ENCODE measurements at regions of chr17 and their contacts with region 1.

Region 1: GRCh38 chr17:81387100-81388090 is 7.9 kb upstream of the BAHCC1 start:
- DNase-seq: peak; percentile 59
- H3K4me3 ChIP-seq: peak overlapping the region; percentile 79
- H3K27ac ChIP-seq: peak overlapping the region; percentile 97
- H3K4me1 ChIP-seq: peaks cover 67% of the 10 kb centered on the region
- H3K27me3 ChIP-seq: no peaks in the 10 kb centered on the region
- CTCF ChIP-seq: no peak

Region 2: GRCh38 chr17:81484195-81484979 is 97.0 kb after region 1 on chr17:
- intact Hi-C with region 1: loop called (anchors 5 kb)
- DNase-seq: peak; percentile 88
- H3K4me3 ChIP-seq: peak overlapping the region; percentile 64
- H3K27ac ChIP-seq: peak overlapping the region; percentile 58
- H3K4me1 ChIP-seq: peaks cover 72% of the 10 kb centered on the region
- H3K27me3 ChIP-seq: no peaks in the 10 kb centered on the region
- CTCF ChIP-seq: peak; percentile 98